T-cell (primary cell): ENCODE measurements at regions of chr3 and their contacts with region 1.

Region 1: DNA sequence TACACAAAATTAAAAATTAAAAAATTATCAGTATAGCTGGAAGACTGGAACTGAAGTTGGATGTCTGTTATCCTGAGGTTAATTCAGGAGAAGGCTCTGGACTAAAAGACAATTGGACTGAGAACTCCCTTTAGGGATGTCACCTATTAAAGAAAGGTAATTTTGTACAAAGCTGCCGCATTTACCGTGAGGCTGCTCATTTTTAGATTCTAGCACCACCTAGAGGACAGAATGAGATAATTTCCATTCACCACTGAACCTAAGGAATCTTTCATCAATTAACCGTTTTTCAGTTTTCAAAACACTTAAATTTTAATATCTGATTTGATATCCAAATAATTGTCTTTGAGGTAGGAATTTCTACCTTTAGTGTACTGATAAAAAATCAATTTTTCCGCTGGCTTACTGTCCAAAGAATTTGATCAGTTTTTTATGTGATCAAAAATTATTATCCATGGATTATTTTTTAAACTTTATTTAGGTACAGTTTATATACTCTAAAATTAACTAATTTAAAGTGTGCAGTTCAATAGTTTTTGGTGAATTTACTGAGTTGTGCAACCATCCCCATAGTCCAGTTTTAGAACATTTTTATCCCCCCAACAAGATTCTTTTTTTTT is 106.7 kb upstream of the TNIK start:
- DNase-seq: peak in 5 of 35 experiments; percentile 3 to 76 (median 9)
- ATAC-seq: peak in 3 of 4 experiments; percentile 45 to 62 (median 48)
- H3K4me3 ChIP-seq: no peak overlapping the region
- H3K4me3 Mint-ChIP-seq: no peak overlapping the region
- H3K27ac ChIP-seq: no peak overlapping the region
- H3K27ac Mint-ChIP-seq: no peak overlapping the region
- H3K4me1 ChIP-seq: peaks cover 0 to 3% of the 10 kb centered on the region in 2 experiments
- H3K4me1 Mint-ChIP-seq: peaks cover 3 to 8% (median 7%) of the 10 kb centered on the region in 3 donors
- H3K27me3 ChIP-seq: no peaks in the 10 kb centered on the region
- H3K27me3 Mint-ChIP-seq: peaks cover 8 to 13% of the 10 kb centered on the region in 2 donors

Region 2: GRCh38 chr3:171162986-171163723 is 403.8 kb before region 1 on chr3:
- CTCF ChIA-PET with region 1: interaction called, 20 to 21 read pairs
- POLR2A ChIA-PET with region 1: no interaction called
- DNase-seq: peak in 4 of 35 experiments; percentile 5 to 62 (median 14)
- ATAC-seq: no peak
- H3K4me3 ChIP-seq: no peak overlapping the region
- H3K4me3 Mint-ChIP-seq: no peak overlapping the region
- H3K27ac ChIP-seq: no peak overlapping the region
- H3K27ac Mint-ChIP-seq: no peak overlapping the region
- H3K4me1 ChIP-seq: peaks cover 0 to 4% of the 10 kb centered on the region in 2 experiments
- H3K4me1 Mint-ChIP-seq: peaks cover 21 to 26% (median 23%) of the 10 kb centered on the region in 3 donors
- H3K27me3 ChIP-seq: no peaks in the 10 kb centered on the region
- H3K27me3 Mint-ChIP-seq: no peaks in the 10 kb centered on the region

Region 3: DNA sequence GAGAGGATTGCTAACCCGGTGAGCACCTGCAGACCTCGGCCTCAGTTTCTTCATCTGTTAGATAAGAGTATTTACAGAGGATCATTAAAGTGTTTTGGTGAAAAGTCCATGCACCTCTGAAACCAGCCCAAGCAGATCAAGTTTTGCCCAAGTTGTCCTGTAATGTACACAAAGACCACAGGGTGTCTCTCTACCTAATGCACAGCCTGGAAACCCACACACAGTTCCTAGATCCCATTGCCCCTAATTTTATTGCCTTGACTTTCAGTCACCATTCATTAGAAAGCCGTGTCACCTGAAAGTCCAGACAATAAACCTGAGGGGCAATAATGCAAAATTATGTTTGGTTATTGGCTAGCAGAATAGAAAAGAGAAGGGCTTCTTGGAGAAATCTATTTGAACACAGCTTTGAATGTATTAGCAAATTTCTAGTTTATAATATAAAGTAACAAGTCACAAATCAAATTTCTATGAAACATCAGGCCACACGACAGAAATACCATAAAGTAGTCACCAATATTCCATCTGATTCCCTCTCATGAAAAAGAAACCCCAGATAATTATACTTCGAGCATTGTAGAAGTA is 379.1 kb before region 1 on chr3:
- CTCF ChIA-PET with region 1: interaction called, 7 to 23 read pairs
- POLR2A ChIA-PET with region 1: no interaction called
- DNase-seq: peak in 11 of 35 experiments; percentile 0 to 59 (median 6)
- ATAC-seq: peak in 2 of 4 experiments; percentile 40 to 60
- H3K4me3 ChIP-seq: no peak overlapping the region
- H3K4me3 Mint-ChIP-seq: no peak overlapping the region
- H3K27ac ChIP-seq: no peak overlapping the region
- H3K27ac Mint-ChIP-seq: no peak overlapping the region
- H3K4me1 ChIP-seq: peaks cover 0 to 3% of the 10 kb centered on the region in 2 experiments
- H3K4me1 Mint-ChIP-seq: peaks cover 18 to 36% (median 21%) of the 10 kb centered on the region in 3 donors
- H3K27me3 ChIP-seq: no peaks in the 10 kb centered on the region
- H3K27me3 Mint-ChIP-seq: no peaks in the 10 kb centered on the region

Region 4: DNA sequence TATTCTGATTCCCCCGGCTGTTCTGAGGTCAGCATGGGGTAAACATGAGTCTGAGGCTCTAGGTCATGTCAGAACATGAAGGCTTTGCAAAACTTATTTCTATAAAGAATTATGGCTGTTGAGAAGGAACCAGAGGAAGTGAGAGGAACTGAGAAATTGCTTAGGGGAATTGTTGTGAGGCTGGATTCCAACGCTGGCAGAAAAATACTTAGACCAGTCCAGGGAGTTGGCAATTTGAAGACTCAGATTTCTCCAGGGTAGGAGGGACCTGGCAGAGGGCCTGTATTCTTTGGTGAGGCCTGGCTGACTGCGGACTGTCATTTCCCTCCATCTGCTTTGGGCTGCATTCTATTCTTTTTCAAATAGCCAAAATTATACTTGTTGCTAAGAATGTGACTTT is 87.9 kb after region 1 on chr3:
- CTCF ChIA-PET with region 1: no interaction called
- POLR2A ChIA-PET with region 1: no interaction called
- DNase-seq: no peak
- ATAC-seq: no peak
- H3K4me3 ChIP-seq: no peak overlapping the region
- H3K4me3 Mint-ChIP-seq: no peak overlapping the region
- H3K27ac ChIP-seq: no peak overlapping the region
- H3K27ac Mint-ChIP-seq: no peak overlapping the region
- H3K4me1 ChIP-seq: no peaks in the 10 kb centered on the region
- H3K4me1 Mint-ChIP-seq: no peaks in the 10 kb centered on the region
- H3K27me3 ChIP-seq: no peaks in the 10 kb centered on the region
- H3K27me3 Mint-ChIP-seq: peaks cover 0 to 3% of the 10 kb centered on the region in 2 donors

Region 5: GRCh38 chr3:172369590-172370259 is 802.8 kb after region 1 on chr3:
- CTCF ChIA-PET with region 1: interaction called in 1 of 2 experiments, 10 read pairs
- POLR2A ChIA-PET with region 1: no interaction called
- DNase-seq: no peak
- ATAC-seq: no peak
- H3K4me3 ChIP-seq: no peak overlapping the region
- H3K4me3 Mint-ChIP-seq: no peak overlapping the region
- H3K27ac ChIP-seq: no peak overlapping the region
- H3K27ac Mint-ChIP-seq: no peak overlapping the region
- H3K4me1 ChIP-seq: no peaks in the 10 kb centered on the region
- H3K4me1 Mint-ChIP-seq: no peaks in the 10 kb centered on the region
- H3K27me3 ChIP-seq: no peaks in the 10 kb centered on the region
- H3K27me3 Mint-ChIP-seq: no peaks in the 10 kb centered on the region